ENCODE measurements at regions of chr7 and their contacts with region 1.

Region 1: GRCh38 chr7:21898265-21898930 is 47.3 kb downstream of the CDCA7L start:
- H3K4me3 Mint-ChIP-seq: peak overlapping the region; percentile 49
- H3K27ac Mint-ChIP-seq: peak overlapping the region; percentile 84
- H3K4me1 Mint-ChIP-seq: peaks cover 31% of the 10 kb centered on the region
- H3K27me3 Mint-ChIP-seq: peaks cover 2% of the 10 kb centered on the region

Region 2: DNA sequence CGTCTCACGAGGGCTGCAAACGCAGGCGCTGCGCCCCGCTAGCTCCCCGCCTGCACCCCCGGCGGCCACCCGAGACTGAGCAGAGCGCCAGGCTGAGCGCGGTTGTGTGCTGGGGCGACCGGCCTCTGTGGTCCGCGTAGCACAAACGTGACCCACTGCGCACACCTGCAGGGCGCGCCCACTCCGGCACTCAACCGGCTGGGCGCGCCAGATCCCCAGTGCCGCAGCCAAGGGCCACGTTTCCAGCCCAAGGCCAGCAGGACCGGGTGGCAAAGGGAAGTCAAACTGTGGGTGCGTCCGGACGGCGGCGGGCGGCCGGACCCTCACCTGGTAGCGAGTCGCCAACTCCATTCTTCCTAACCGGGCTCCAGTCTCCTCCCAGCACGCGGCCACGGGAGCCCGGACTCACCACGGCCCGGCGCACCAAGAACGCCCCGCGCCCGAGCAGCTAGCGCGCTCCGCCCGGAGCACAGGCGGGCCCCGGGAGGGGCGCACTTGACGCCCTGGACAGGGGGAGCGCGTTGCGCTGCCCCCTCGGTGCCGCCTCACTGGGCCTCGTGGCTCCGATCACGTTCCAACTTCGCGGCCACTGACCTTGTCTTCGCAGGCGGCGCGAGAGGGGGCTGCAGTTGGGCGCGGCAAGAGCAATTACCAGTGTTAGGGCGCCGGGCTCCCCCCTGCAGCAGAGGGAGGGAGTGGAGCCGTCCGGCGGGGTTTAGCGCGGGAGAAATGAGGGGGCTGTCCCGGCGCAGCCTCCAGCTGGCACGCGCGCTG is 47.2 kb after region 1 on chr7 and contains the start of gene CDCA7L:
- intact Hi-C with region 1: loop called (anchors 10 kb)
- H3K4me3 Mint-ChIP-seq: peak within 1 kb of the TSS; percentile 91
- H3K27ac Mint-ChIP-seq: peak within 1 kb of the TSS; percentile 88
- H3K4me1 Mint-ChIP-seq: peaks cover 66% of the 10 kb centered on the region
- H3K27me3 Mint-ChIP-seq: peaks cover 1% of the 10 kb centered on the region

Region 3: GRCh38 chr7:22156205-22156604 is 257.8 kb after region 1 on chr7:
- intact Hi-C with region 1: no loop called
- H3K4me3 Mint-ChIP-seq: no peak overlapping the region
- H3K27ac Mint-ChIP-seq: no peak overlapping the region
- H3K4me1 Mint-ChIP-seq: no peaks in the 10 kb centered on the region
- H3K27me3 Mint-ChIP-seq: no peaks in the 10 kb centered on the region

Measured in dendritic cell treated with granulocyte-macrophage colony-stimulating factor and Interleukin-4, amounts not matched to agents 40 ng/mL and 50 ng/mL, for 4 days (primary cell).